Right ventricle myocardium superior (tissue), 1 donor: ENCODE measurements at regions of chr15 and their contacts with region 1.

Region 1: GRCh38 chr15:90869601-90870353 is 1.4 kb downstream of the FURIN start:
- DNase-seq: peak; percentile 89
- ATAC-seq: peak; percentile 74

Region 2: GRCh38 chr15:90233376-90234095 is 636.2 kb before region 1 on chr15 and contains the start of gene CIB1:
- intact Hi-C with region 1: no loop called
- DNase-seq: peak; percentile 99
- ATAC-seq: peak; percentile 94
- total RNA-seq, gene CIB1: 71.6 TPM

Region 3: GRCh38 chr15:90716976-90717821 is 152.6 kb before region 1 on chr15 and contains the start of gene BLM:
- intact Hi-C with region 1: loop called (anchors 5 kb)
- DNase-seq: peak; percentile 97
- ATAC-seq: peak; percentile 100
- total RNA-seq, gene BLM: 37.0 TPM

Region 4: GRCh38 chr15:91956026-91956723 is 1086.4 kb after region 1 on chr15:
- intact Hi-C with region 1: no loop called
- DNase-seq: peak; percentile 63
- ATAC-seq: peak; percentile 50